Motor neuron (in vitro differentiated cells): ENCODE measurements at regions of chr9 and their contacts with region 1.

Region 1: GRCh38 chr9:6566409-6567139 is 79.0 kb downstream of the GLDC start:
- ATAC-seq: peak; percentile 42 to 91 (median 80)
- H3K4me3 ChIP-seq: no peak overlapping the region
- H3K27ac ChIP-seq: no peak overlapping the region
- H3K4me1 ChIP-seq: no peaks in the 10 kb centered on the region

Region 2: DNA sequence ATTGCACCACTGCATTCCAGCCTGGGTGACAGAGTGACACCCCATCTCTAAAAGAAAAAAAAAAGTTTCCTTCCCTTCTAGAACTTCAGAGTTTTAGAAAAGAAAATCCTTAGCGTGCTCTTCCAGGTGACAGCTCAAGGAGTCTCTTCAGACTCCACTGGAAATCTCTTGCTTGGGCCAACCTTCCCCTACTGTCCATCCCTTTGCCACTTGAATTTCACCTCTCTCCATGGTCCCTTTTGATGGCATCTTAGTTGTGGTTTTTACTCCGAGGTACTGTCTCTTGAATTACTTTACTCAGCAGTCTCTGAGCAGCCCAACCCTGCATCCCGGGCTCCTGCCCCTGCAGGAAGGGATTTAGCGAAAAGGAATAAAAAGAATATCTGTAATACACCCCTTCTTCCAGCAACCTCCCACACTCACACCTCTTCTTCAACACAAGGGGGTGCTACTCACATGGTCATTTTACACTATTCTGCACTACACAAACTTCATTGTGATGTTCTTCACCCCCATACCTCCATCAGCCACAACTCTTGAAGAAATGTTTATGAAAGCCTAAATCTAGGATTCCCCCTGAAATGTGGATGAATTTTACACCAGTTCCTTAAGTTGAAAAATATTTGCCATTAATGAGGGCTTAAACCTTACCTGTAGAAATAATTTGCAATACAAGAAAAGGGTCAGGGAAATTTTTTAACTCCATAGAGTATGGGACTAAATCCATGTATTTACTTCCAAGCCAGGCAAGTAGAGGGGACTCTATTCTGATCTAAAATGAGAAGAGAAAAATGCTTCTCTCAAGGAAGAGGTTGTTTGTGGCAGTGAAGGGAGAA is 212.5 kb before region 1 on chr9:
- in situ Hi-C with region 1: loop called in 3 of 9 experiments (anchors 10 to 25 kb)
- ATAC-seq: peak in 5 of 8 experiments; percentile 55 to 98 (median 94)
- H3K4me3 ChIP-seq: no peak overlapping the region
- H3K27ac ChIP-seq: no peak overlapping the region
- H3K4me1 ChIP-seq: no peaks in the 10 kb centered on the region

Region 3: GRCh38 chr9:6415266-6415665 is 151.3 kb before region 1 on chr9:
- in situ Hi-C with region 1: no loop called
- ATAC-seq: no peak
- H3K4me3 ChIP-seq: peak overlapping the region; percentile 67 to 98 (median 74)
- H3K27ac ChIP-seq: no peak overlapping the region
- H3K4me1 ChIP-seq: peaks cover 8 to 15% of the 10 kb centered on the region in 2 donors